Calu3 (cell line): ENCODE measurements at regions of chr2 and their contacts with region 1.

Region 1: DNA sequence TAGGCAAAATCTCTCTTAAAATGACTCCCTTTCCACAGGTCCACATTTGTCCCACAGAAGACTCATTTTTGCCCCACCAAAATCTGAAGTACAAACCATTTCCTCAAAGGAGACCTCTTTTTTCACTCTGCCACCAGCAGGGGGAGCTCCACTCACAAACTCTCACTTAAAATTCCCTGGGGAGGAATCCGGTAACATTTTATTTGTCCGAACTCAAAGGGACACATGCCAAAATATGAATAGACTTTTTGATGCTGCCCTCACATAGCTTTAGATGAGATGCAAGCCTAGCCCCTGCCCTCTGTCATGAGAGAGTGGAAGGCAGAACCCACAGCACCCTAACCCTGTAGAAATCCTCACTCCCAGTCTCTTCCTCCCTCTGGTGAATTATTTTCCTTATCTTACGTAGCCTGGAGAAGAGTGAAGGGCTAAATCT is 57.1 kb downstream of the RMDN2 start:
- DNase-seq: peak; percentile 77
- H3K4me3 Mint-ChIP-seq: no peak overlapping the region
- H3K27ac Mint-ChIP-seq: no peak overlapping the region
- H3K4me1 Mint-ChIP-seq: peaks cover 8% of the 10 kb centered on the region
- H3K27me3 Mint-ChIP-seq: no peaks in the 10 kb centered on the region
- CTCF ChIP-seq: peak; percentile 80

Region 2: DNA sequence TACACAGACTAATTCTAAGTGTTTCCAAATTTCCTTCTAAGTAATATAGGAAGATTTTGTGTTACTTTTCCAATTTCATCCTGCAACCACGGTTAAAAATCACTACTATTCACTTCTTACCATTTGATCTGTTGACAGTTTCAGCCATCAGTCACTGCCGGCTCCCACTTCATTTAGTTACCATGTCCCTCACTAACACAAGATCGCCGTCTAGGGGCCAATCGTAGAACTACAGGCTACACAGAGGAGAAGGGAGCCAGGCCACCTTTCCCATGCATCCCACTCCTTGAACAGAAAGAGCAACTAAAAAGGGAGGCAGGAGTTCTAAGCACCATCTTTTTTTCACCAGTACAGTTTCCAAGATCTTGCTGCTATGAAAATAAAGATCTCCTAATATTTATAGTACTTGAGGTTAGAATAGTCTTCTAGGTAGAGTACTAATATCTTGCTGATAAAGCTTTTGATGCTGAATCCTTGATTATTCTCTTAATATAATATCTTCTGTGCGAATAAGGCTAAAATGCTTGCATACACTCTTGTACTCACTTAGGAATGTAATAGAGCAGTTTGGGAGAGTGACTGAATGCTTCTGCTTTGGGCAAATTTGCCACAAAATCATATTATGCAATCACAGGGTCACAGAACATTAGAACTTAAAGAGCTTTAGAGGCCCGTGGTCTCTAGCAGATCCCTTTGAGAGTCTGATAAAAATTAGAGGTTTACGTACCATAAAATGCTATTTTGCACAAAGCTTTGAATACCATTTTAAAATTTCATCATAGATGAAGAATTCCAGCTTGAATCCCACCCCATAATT is 133.3 kb after region 1 on chr2:
- CTCF ChIA-PET with region 1: no interaction called
- intact Hi-C with region 1: loop called (anchors 2 kb)
- DNase-seq: peak; percentile 89
- H3K4me3 Mint-ChIP-seq: no peak overlapping the region
- H3K27ac Mint-ChIP-seq: no peak overlapping the region
- H3K4me1 Mint-ChIP-seq: peaks cover 66% of the 10 kb centered on the region
- H3K27me3 Mint-ChIP-seq: no peaks in the 10 kb centered on the region
- CTCF ChIP-seq: peak; percentile 88